ENCODE measurements at regions of chr17 and their contacts with region 1.

Region 1: GRCh38 chr17:2029911-2030778 is at the start of gene DPH1:
- DNase-seq: peak; percentile 83
- H3K4me3 Mint-ChIP-seq: peak within 1 kb of the TSS; percentile 95
- H3K27ac Mint-ChIP-seq: peak within 1 kb of the TSS; percentile 69
- H3K4me1 Mint-ChIP-seq: peaks cover 12% of the 10 kb centered on the region
- H3K27me3 Mint-ChIP-seq: peaks cover 32% of the 10 kb centered on the region
- total RNA-seq, gene DPH1: 43.4 and 47.5 TPM in 2 replicates

Region 2: GRCh38 chr17:1908699-1909309 is 121.3 kb before region 1 on chr17:
- intact Hi-C with region 1: loop called (anchors 2 kb)
- DNase-seq: peak; percentile 18
- H3K4me3 Mint-ChIP-seq: no peak overlapping the region
- H3K27ac Mint-ChIP-seq: no peak overlapping the region
- H3K4me1 Mint-ChIP-seq: peaks cover 2% of the 10 kb centered on the region
- H3K27me3 Mint-ChIP-seq: peaks cover 58% of the 10 kb centered on the region

Region 3: DNA sequence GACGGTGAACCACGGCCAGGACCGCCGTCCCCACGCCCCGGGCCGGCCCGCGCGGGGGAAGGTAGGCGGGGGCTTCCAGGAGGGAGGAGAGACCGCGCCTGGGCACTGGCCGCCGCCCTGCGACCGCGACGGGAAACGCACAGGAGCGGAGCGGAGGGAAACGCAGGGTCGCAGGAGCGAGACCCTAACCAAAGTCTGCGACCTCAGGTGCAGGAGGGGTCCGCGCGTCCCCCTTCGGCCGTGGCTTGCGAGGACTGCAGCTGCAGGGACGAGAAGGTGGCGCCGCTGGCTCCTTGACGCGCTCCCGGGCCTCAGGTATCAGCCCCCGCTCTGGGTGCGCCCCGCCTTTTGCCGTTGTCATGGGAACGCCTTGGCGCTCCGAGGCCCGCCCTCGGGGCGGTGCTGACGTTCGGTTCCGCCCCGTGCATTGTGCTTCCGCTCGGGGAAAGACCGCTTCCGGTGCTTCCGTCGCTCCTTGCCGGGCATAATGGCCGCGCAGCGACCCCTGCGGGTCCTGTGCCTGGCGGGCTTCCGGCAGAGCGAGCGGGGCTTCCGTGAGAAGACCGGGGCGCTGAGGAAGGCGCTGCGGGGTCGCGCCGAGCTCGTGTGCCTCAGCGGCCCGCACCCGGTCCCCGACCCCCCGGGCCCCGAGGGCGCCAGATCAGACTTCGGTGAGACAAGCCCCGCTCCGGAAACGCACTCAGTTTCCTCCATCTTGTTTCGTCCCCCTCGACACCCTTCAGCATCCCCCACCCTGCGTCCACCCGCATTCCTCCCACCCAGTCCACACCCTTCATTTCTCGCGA is 11.6 kb after region 1 on chr17 and contains the start of gene OVCA2:
- intact Hi-C with region 1: loop called (anchors 1 kb)
- DNase-seq: peak; percentile 96
- H3K4me3 Mint-ChIP-seq: peak within 1 kb of the TSS; percentile 89
- H3K27ac Mint-ChIP-seq: peak within 1 kb of the TSS; percentile 91
- H3K4me1 Mint-ChIP-seq: peaks cover 21% of the 10 kb centered on the region
- H3K27me3 Mint-ChIP-seq: no peaks in the 10 kb centered on the region
- total RNA-seq, gene OVCA2: 29.9 and 35.8 TPM in 2 replicates